Activated naive CD4-positive, alpha-beta T cell treated with anti-CD3 and anti-CD28 coated beads for 36 hours (primary cell): ENCODE measurements at regions of chr16 and their contacts with region 1.

Region 1: GRCh38 chr16:20874088-20874581 is 26.0 kb downstream of the DCUN1D3 start:
- DNase-seq: peak; percentile 30
- H3K4me3 Mint-ChIP-seq: no peak overlapping the region
- H3K27ac Mint-ChIP-seq: peak overlapping the region; percentile 78
- H3K4me1 Mint-ChIP-seq: peaks cover 53% of the 10 kb centered on the region
- H3K27me3 Mint-ChIP-seq: no peaks in the 10 kb centered on the region

Region 2: GRCh38 chr16:20938426-20938825 is 64.3 kb after region 1 on chr16:
- CTCF ChIA-PET with region 1: interaction called, 6 read pairs
- intact Hi-C with region 1: loop called (anchors 1 kb)
- DNase-seq: peak; percentile 46
- H3K4me3 Mint-ChIP-seq: no peak overlapping the region
- H3K27ac Mint-ChIP-seq: no peak overlapping the region
- H3K4me1 Mint-ChIP-seq: peaks cover 28% of the 10 kb centered on the region
- H3K27me3 Mint-ChIP-seq: no peaks in the 10 kb centered on the region